ENCODE measurements at regions of chr9 and their contacts with region 1.

Region 1: DNA sequence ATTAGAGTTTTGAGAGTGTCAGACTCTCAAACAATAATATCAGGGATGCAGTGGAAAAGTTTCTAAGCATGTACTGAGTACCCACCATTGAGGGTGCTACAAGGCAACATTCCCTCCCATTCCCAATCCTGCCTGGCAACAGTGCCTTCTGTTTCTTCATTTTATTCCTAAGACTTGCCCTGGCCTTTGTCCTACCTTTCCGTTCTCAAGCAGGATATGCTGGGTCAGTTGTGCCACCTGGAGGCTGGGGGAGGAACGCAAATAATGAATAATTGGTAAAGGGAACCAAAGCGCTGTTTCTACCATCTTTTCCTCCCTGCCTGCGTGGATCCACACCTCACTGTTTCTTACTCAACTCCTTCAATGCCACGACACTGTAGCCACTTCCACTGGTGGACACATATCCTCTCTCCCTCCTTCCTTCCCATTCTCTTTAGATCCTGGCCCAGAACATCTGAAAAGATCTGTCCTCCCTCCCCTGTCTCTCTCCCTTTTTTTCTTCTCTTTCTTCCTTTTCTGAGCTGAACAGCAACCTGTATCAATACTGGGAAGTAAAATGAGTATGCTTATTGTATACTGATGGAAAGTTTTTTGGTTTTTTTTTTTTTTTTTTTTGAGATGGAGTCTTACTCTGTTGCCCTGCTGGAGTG is 149.5 kb downstream of the C9orf152 start:
- DNase-seq: peak; percentile 87
- H3K4me3 Mint-ChIP-seq: peak overlapping the region; percentile 8
- H3K27ac Mint-ChIP-seq: peak overlapping the region; percentile 71
- H3K4me1 Mint-ChIP-seq: peaks cover 37% of the 10 kb centered on the region
- H3K27me3 Mint-ChIP-seq: no peaks in the 10 kb centered on the region

Region 2: DNA sequence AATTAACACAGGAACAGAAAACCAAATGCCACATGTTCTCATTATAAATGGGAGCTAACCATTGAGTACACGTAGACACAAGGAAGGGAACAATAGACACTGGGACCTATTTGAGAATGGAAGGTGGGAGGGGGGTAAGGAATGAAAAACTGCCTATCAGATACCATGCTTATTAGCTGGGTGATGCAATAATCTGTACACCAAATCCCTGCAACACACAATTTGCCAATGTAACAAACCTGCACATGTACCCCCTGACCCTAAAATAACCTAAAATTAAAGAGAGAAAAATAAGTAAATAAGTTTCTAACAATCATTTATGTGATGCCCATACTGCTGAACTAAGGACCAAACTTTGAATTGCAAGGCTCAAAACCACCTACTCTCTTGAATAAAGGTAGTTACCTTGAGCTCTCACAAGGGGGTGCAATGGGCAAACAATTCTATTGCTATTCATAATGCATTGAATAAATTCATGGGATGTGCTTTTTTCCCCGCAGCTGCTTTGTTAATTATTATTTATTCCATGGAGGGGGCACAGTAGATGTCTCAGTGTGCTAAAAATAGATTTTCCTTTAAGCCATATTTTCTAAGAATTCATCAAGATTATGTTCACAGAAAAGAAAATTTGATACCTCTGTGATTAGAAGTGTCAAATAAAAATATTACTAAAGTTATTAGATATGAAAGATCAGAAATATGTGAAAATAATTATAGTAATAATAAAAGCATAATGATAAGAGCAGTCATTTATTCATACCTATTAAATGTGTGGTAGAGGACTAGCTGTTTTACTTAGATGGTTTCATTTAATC is 484.2 kb before region 1 on chr9:
- intact Hi-C with region 1: loop called (anchors 10 kb)
- DNase-seq: peak; percentile 79
- H3K4me3 Mint-ChIP-seq: no peak overlapping the region
- H3K27ac Mint-ChIP-seq: no peak overlapping the region
- H3K4me1 Mint-ChIP-seq: no peaks in the 10 kb centered on the region
- H3K27me3 Mint-ChIP-seq: peaks cover 30% of the 10 kb centered on the region

Region 3: GRCh38 chr9:109683521-109683920 is 374.9 kb before region 1 on chr9:
- intact Hi-C with region 1: no loop called
- DNase-seq: no peak
- H3K4me3 Mint-ChIP-seq: no peak overlapping the region
- H3K27ac Mint-ChIP-seq: no peak overlapping the region
- H3K4me1 Mint-ChIP-seq: no peaks in the 10 kb centered on the region
- H3K27me3 Mint-ChIP-seq: peaks cover 2% of the 10 kb centered on the region

Region 4: DNA sequence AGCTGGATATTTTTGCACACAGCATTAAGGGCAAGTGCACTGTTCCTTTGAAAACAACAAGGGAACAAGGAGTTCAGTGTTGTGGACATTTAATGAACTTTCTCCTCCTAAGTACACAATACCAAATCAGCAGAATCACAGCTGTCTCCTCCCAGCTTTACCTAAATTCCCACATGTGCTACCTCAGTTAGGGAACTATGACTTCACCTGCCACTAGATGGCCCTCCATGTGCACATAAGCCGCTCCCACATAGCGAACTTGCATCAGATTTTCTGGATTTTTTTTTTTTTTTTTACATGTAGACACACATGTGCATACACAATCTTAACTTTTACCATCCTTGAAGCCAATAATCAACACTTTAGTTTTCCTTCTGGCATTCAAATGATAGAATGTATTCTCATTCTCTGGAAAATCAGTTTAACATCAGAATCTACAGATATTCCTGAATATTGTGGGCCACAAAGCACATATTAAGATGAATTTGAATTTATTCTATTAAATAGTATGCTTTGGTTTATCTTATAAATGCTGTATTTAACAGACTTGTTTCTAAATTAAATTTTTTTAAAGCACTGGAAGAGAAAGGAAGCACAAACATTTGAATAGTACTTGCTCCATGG is 154.8 kb before region 1 on chr9:
- intact Hi-C with region 1: loop called (anchors 1 kb)
- DNase-seq: peak; percentile 90
- H3K4me3 Mint-ChIP-seq: no peak overlapping the region
- H3K27ac Mint-ChIP-seq: peak overlapping the region; percentile 23
- H3K4me1 Mint-ChIP-seq: peaks cover 36% of the 10 kb centered on the region
- H3K27me3 Mint-ChIP-seq: no peaks in the 10 kb centered on the region

Region 5: GRCh38 chr9:110069326-110070248 is 11.2 kb after region 1 on chr9:
- intact Hi-C with region 1: no loop called
- DNase-seq: no peak
- H3K4me3 Mint-ChIP-seq: no peak overlapping the region
- H3K27ac Mint-ChIP-seq: no peak overlapping the region
- H3K4me1 Mint-ChIP-seq: peaks cover 55% of the 10 kb centered on the region
- H3K27me3 Mint-ChIP-seq: no peaks in the 10 kb centered on the region